Activated CD4-positive, alpha-beta T cell treated with anti-CD3 and anti-CD28 coated beads for 36 hours (primary cell): ENCODE measurements at regions of chr11 and their contacts with region 1.

Region 1: DNA sequence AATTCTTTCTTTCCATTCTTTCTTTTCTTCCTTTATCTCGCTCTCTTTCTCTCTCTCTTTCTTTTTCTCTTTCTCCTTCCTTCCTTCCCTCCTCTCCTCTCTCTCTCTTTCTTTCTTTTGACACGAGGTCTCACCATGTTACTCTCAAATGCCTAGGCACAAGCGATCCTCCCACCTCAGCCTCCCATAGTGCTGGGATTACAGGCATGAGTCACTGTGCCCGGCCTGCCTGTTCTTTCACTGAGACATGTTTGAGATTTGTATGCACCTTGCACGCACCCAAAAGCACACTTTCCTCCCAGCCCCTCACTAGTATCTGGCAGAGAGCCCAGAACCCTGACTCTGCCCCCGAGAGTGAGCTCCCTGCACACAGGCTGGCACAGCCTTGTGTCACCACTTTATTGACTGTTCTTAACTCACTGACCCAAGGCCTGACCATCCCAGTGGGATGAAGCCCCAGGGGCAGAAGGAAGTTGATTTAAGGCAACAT is 56.8 kb downstream of the CD6 start:
- DNase-seq: peak; percentile 87
- ATAC-seq: peak; percentile 45
- H3K4me3 Mint-ChIP-seq: peak overlapping the region; percentile 79
- H3K27ac Mint-ChIP-seq: peak overlapping the region; percentile 97
- H3K4me1 Mint-ChIP-seq: peaks cover 87% of the 10 kb centered on the region
- H3K27me3 Mint-ChIP-seq: no peaks in the 10 kb centered on the region

Region 2: GRCh38 chr11:61041755-61042518 is 13.6 kb after region 1 on chr11:
- CTCF ChIA-PET with region 1: interaction called, 5 read pairs
- POLR2A ChIA-PET with region 1: interaction called, 40 read pairs
- intact Hi-C with region 1: loop called (anchors 2 kb)
- DNase-seq: peak; percentile 92
- ATAC-seq: peak; percentile 94
- H3K4me3 Mint-ChIP-seq: peak overlapping the region; percentile 64
- H3K27ac Mint-ChIP-seq: peak overlapping the region; percentile 91
- H3K4me1 Mint-ChIP-seq: peaks cover 72% of the 10 kb centered on the region
- H3K27me3 Mint-ChIP-seq: no peaks in the 10 kb centered on the region

Region 3: DNA sequence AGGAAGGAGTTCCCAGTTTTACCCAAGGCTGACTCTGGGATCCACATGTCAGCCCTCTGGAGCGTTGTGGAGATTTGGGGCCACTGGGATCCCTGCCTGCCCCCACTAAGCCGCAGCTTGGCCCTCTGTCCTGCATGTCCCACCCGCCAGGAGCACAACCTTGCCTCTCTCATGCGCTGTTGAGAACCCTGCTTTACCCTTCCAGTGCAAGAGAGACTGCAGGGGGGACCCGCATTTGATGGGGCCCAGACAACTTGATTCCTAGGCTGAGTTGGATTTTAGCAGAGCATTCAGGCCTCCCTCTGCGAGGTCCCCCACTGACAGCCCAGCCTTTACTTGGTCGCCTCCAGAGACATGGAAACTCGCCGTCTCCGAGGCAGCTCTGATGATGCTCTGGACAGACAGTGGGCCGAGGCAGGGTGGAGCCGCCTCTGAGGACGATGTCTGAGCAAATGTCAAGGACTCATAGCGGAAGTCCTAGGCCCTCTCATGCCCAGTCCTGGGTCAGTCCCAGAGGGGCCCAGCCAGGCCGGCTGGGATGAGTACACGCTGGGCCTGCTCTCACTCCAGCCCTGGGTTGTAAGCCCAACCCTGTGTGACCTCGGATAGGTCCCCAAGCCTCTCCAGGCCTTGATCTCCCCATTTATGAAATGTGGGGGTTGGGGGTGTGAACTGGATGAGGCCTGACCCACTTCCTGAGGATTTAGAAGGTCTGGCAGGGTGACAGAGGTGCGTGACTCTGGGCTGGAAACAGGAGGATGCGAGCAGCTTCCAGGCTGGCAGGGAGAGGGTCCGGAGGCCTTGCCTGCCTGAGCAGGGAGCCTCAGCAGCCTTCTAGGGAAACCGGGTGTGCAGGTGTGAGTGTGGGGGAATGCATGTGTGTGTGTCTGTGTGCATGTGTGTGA is 74.6 kb after region 1 on chr11:
- CTCF ChIA-PET with region 1: interaction called, 4 read pairs
- POLR2A ChIA-PET with region 1: interaction called, 4 read pairs
- intact Hi-C with region 1: loop called in 1 of 2 experiments (anchors 2 kb)
- DNase-seq: peak; percentile 49
- ATAC-seq: peak; percentile 16
- H3K4me3 Mint-ChIP-seq: no peak overlapping the region
- H3K27ac Mint-ChIP-seq: no peak overlapping the region
- H3K4me1 Mint-ChIP-seq: peaks cover 25% of the 10 kb centered on the region
- H3K27me3 Mint-ChIP-seq: no peaks in the 10 kb centered on the region

Region 4: GRCh38 chr11:61129639-61130523 is 101.6 kb after region 1 on chr11:
- CTCF ChIA-PET with region 1: interaction called, 4 read pairs
- POLR2A ChIA-PET with region 1: no interaction called
- intact Hi-C with region 1: loop called in 1 of 2 experiments (anchors 2 kb)
- DNase-seq: peak; percentile 97
- ATAC-seq: peak; percentile 89
- H3K4me3 Mint-ChIP-seq: peak overlapping the region; percentile 14
- H3K27ac Mint-ChIP-seq: peak overlapping the region; percentile 64
- H3K4me1 Mint-ChIP-seq: peaks cover 27% of the 10 kb centered on the region
- H3K27me3 Mint-ChIP-seq: no peaks in the 10 kb centered on the region

Region 5: DNA sequence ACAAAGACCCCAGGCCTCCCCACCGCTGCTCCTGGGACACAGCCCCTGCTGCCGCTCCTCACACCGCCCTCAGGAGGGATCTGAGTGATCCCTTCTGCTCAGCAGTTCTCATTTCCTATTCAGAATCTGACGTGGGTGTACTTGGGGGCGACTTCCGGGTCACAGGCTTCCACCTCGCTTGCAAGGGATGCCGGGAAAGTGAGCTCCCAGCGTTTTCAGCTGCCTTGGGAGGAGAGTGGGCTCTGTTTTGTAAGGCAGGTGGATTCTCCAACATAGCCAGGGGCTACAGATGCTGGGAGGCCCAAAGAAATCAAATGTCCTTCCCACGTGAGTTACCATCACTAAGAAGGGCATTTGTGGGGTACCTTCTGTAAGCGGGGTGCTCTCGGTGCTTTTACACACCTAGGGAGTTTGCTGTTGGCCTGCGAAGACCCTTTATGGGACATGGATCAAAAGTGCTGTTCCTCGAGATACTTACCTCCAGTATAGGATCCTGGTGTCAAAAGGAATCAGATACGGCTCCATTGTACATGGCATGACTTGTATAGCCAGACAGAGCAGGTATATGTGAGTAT is 470.5 kb after region 1 on chr11:
- CTCF ChIA-PET with region 1: no interaction called
- POLR2A ChIA-PET with region 1: interaction called, 11 read pairs
- intact Hi-C with region 1: no loop called
- DNase-seq: no peak
- ATAC-seq: no peak
- H3K4me3 Mint-ChIP-seq: no peak overlapping the region
- H3K27ac Mint-ChIP-seq: no peak overlapping the region
- H3K4me1 Mint-ChIP-seq: no peaks in the 10 kb centered on the region
- H3K27me3 Mint-ChIP-seq: no peaks in the 10 kb centered on the region